Ascending aorta (tissue), 2 donors: ENCODE measurements at regions of chr3 and their contacts with region 1.

Region 1: DNA sequence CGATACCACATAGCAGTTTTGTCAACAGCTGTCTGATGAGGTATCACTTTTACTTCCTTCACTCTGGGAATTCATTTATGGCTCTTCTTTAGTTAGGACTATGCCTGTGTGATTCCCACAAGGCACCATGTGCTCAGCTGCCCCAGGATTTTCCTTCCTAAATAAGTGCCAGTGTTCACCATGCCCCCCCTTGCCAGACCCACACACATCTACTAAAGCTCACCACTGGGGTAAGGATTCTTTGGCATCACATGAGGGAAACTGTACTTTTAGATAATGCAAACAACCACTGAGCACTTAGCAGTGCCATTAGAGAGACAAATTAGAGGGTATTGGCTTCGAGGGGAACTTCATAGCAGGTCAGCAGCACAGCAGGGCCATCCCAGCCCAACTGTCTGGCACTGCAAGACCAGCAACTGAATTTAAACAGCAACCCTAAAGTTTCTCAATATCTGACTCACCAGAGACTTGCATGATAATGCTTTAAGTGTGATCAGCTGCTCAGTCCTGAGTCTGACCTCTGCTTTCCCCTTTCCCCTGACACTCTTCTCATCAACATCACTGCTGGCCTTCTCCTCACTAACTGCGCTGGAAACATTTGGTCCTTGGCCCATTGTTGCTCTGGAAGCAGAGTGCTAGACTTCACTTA is 114.3 kb downstream of the STAC start:
- DNase-seq: peak in 1 of 2 donors; percentile 76
- H3K4me3 ChIP-seq: no peak overlapping the region
- H3K27ac ChIP-seq: peak overlapping the region in 1 of 2 donors; percentile 31
- H3K4me1 ChIP-seq: peaks cover 0 to 17% of the 10 kb centered on the region in 2 donors
- H3K27me3 ChIP-seq: no peaks in the 10 kb centered on the region
- CTCF ChIP-seq: no peak

Region 2: DNA sequence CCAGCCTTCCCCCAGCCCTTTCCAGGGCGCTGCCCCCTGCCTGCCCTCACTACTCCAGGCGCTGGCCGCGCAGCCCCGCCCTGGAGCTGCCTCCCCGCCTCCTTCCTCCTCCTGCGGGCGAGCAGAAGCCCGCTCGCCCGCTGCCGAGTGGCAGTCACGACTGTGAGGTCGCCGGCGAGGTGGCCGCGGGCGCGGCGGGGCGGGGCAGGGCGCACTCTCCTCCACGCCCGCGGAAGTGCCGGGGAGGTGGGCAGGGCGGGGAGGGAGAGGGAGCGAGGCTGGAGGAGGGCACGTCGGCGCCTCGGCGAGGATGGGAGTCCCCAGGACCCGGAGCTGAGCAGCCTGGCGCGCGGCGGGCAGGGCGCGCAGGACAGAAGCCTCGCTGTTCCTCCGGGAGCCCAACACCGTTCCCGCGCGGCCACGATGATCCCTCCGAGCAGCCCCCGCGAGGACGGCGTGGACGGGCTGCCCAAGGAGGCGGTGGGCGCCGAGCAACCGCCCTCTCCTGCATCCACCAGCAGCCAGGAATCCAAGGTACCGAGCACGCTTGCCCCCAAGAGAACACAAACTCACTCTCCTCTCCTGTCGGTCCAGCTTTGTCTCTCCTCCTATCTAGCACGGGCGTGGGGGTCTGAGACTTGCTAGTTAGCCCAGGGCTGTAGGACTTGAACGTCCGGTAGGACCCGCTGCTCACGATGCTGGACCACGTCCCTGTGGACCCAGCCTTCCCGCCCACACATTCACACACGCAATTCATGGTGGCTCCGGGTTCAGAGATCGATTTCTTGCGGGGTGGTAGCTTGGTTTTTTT is 114.2 kb before region 1 on chr3 and contains the start of gene STAC:
- intact Hi-C with region 1: loop called (anchors 5 kb)
- DNase-seq: peak in 1 of 2 donors; percentile 74
- H3K4me3 ChIP-seq: peak within 1 kb of the TSS; percentile 56 to 93
- H3K27ac ChIP-seq: peak within 1 kb of the TSS; percentile 66 to 76
- H3K4me1 ChIP-seq: no peaks in the 10 kb centered on the region
- H3K27me3 ChIP-seq: no peaks in the 10 kb centered on the region
- CTCF ChIP-seq: no peak
- total RNA-seq, gene STAC: 16.0 TPM

Region 3: DNA sequence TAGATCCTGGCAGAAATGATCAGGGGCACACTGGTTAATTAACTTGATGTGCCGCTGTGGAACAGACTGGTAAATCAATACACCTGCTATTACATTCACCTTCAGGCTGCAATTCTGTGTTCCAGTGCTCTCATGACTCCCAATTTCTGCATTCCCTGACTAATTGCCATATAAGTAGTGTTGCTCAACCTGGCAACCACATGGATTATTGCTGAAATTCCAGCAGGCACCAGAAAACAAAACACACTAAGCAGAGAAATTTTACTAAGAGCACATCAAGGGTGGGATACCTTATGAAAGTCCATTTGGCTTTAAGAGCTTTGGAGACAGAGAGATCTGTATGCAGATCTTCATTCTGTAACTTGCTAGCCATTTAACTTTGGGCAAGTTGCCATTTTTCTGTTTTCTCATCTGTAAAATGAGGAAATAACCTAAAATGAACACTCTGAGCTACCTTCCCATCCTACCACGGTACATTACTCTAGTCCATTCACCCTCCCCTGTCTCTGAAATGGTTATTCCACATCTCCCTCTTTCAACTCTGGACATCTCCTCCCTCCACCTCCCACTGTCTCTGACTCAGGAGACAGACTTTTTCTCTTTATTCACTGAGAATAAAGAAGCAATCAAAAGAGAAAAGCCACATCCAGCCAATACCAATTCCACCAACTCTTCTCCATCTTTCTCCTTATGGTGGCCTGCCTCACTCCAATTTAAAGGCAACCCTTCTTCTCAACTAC is 59.7 kb before region 1 on chr3:
- intact Hi-C with region 1: loop called (anchors 10 kb)
- DNase-seq: no peak
- H3K4me3 ChIP-seq: no peak overlapping the region
- H3K27ac ChIP-seq: peak overlapping the region; percentile 53 to 77
- H3K4me1 ChIP-seq: peaks cover 0 to 38% of the 10 kb centered on the region in 2 donors
- H3K27me3 ChIP-seq: no peaks in the 10 kb centered on the region
- CTCF ChIP-seq: no peak

Region 4: GRCh38 chr3:36444909-36445308 is 49.7 kb before region 1 on chr3:
- intact Hi-C with region 1: no loop called
- DNase-seq: no peak
- H3K4me3 ChIP-seq: no peak overlapping the region
- H3K27ac ChIP-seq: peak overlapping the region; percentile 5 to 14
- H3K4me1 ChIP-seq: no peaks in the 10 kb centered on the region
- H3K27me3 ChIP-seq: no peaks in the 10 kb centered on the region
- CTCF ChIP-seq: no peak

Region 5: DNA sequence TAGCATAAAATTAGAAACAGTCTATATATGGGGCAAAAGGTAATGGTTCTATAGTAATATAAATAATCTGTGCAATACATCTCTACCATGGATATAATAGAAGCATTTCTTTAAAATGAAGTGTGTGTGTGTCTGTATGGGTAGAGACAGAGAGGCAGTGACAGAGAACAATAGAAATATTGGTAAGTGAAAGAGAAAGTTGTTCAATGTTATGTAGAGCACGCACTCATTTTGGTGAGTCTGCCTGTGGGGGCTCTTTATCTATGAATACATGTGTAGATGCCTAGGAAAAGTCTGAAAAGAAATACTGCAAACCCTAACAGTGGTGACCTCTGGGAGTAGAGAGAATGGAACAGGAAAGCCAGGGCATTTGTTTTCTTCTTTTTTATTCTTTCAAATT is 68.4 kb after region 1 on chr3:
- intact Hi-C with region 1: no loop called
- DNase-seq: no peak
- H3K4me3 ChIP-seq: no peak overlapping the region
- H3K27ac ChIP-seq: no peak overlapping the region
- H3K4me1 ChIP-seq: peaks cover 0 to 10% of the 10 kb centered on the region in 2 donors
- H3K27me3 ChIP-seq: no peaks in the 10 kb centered on the region
- CTCF ChIP-seq: no peak

Region 6: GRCh38 chr3:37419979-37420378 is 925.4 kb after region 1 on chr3:
- intact Hi-C with region 1: no loop called
- DNase-seq: no peak
- H3K4me3 ChIP-seq: no peak overlapping the region
- H3K27ac ChIP-seq: no peak overlapping the region
- H3K4me1 ChIP-seq: no peaks in the 10 kb centered on the region
- H3K27me3 ChIP-seq: no peaks in the 10 kb centered on the region
- CTCF ChIP-seq: no peak